ENCODE measurements at regions of chr3 and their contacts with region 1.

Region 1: GRCh38 chr3:22089284-22089683 is 338.3 kb upstream of the ZNF385D start:
- DNase-seq: peak; percentile 80
- ATAC-seq: peak; percentile 90
- H3K4me3 ChIP-seq: no peak overlapping the region
- H3K27ac ChIP-seq: no peak overlapping the region
- H3K4me1 ChIP-seq: 0 out of 2 replicates have a peak, but pooled peaks cover 4% of the 10 kb centered on the region
- H3K27me3 ChIP-seq: no peaks in the 10 kb centered on the region
- CTCF ChIP-seq: peak; percentile 90

Region 2: GRCh38 chr3:21718161-21718765 is 371.0 kb before region 1 on chr3:
- CTCF ChIA-PET with region 1: no interaction called
- POLR2A ChIA-PET with region 1: no interaction called
- intact Hi-C with region 1: no loop called
- DNase-seq: peak; percentile 97
- ATAC-seq: peak; percentile 98
- H3K4me3 ChIP-seq: no peak overlapping the region
- H3K27ac ChIP-seq: peak overlapping the region; percentile 94
- H3K4me1 ChIP-seq: peaks cover 18% of the 10 kb centered on the region
- H3K27me3 ChIP-seq: no peaks in the 10 kb centered on the region
- CTCF ChIP-seq: no peak

Region 3: DNA sequence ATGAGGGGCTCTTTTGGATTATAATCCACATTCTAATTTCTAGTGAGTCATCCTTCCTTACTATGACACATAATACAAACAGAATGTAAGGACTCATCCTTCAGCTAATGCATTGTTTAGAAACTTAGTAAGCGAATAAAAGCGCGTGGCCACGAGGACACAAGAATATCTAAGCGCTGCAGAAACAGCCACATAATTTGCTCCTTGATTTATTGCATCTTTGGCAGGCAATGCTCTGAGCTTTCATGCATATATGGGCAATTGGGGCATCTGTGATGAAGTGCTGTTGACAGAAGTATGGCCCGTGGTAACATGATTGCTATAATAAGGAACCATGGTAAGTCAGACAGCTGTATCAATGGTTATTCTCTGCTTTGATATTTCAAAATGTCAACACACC is 147.0 kb before region 1 on chr3:
- CTCF ChIA-PET with region 1: no interaction called
- POLR2A ChIA-PET with region 1: no interaction called
- intact Hi-C with region 1: loop called (anchors 10 kb)
- DNase-seq: peak; percentile 96
- ATAC-seq: peak; percentile 99
- H3K4me3 ChIP-seq: no peak overlapping the region
- H3K27ac ChIP-seq: peak overlapping the region; percentile 41
- H3K4me1 ChIP-seq: peaks cover 7% of the 10 kb centered on the region
- H3K27me3 ChIP-seq: no peaks in the 10 kb centered on the region
- CTCF ChIP-seq: no peak

Region 4: DNA sequence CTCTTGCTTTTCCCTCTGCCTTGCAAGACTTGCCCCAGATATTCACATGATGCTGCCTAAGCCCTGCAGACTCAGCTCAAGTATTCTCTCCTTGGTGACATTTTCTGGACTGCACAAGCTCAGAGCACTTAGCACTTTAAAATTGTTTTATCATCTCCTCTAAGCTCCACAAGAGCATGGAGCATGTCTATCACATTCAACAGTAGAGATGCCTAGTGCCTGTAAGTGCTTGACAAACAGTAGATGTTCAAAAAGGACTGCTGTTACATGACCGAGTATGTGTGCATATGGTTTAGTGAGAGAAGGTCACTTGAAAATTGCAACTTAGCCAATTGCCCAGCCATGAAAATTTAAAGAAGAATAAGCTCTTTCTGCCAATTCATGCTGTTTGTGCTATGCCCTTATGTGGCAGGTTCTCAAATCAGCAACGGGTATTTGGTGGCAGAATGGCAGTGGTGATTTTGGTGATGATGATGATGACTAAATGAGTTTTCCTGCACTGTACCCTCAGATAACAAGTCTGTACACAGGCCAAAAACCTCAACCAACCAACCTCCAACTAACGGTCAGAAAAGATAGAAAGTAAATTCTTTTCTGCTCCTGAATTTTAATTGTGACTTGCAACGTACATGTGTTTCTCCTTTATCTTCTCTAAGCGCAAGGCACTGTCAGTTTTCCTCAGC is 466.6 kb after region 1 on chr3:
- CTCF ChIA-PET with region 1: no interaction called
- POLR2A ChIA-PET with region 1: no interaction called
- intact Hi-C with region 1: loop called (anchors 5 kb)
- DNase-seq: no peak
- ATAC-seq: no peak
- H3K4me3 ChIP-seq: no peak overlapping the region
- H3K27ac ChIP-seq: no peak overlapping the region
- H3K4me1 ChIP-seq: no peaks in the 10 kb centered on the region
- H3K27me3 ChIP-seq: no peaks in the 10 kb centered on the region
- CTCF ChIP-seq: no peak

Region 5: DNA sequence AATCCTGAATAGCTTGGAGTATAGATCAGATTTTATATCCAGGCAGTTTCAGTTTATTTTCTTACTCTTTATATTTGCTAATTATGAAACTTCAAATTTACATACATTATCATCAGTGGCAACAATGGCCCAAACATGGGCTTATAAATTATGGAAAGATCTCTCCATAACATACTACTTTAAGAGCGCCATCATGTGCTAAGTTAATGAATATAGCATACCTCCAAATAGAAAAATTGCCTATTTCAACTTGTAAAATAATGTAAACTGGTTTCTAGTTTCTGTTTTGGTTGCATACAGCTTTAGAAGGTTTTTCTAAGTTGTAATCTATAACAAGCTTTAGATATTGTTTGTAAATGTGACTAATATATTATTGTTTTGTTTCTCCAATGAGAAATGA is 582.6 kb after region 1 on chr3:
- CTCF ChIA-PET with region 1: no interaction called
- POLR2A ChIA-PET with region 1: no interaction called
- intact Hi-C with region 1: loop called (anchors 5 kb)
- DNase-seq: peak; percentile 33
- ATAC-seq: peak; percentile 35; the same call in 1 of the 2 replicates
- H3K4me3 ChIP-seq: no peak overlapping the region
- H3K27ac ChIP-seq: no peak overlapping the region
- H3K4me1 ChIP-seq: no peaks in the 10 kb centered on the region
- H3K27me3 ChIP-seq: no peaks in the 10 kb centered on the region
- CTCF ChIP-seq: peak; percentile 65

Region 6: DNA sequence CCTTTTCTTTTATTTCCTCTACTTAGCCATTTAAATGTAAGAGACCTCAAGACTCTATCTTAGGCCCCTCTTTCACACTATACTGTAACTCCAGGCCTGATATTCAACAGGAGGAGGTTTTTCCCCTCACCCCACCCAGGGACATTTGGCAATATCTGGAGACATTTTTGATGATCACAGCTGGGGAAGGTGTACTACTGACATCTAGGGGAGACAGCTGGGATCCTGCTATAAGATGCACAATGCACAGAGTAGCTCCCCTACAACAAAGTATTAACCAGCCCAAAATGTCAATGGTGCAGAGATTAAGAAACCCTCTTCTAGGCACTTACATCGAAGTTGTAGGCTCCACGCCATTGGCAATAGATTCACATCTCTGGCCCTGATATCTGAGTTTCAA is 596.3 kb after region 1 on chr3:
- CTCF ChIA-PET with region 1: no interaction called
- POLR2A ChIA-PET with region 1: no interaction called
- intact Hi-C with region 1: loop called (anchors 1 kb)
- DNase-seq: peak; percentile 60
- ATAC-seq: peak; percentile 94
- H3K4me3 ChIP-seq: no peak overlapping the region
- H3K27ac ChIP-seq: no peak overlapping the region
- H3K4me1 ChIP-seq: no peaks in the 10 kb centered on the region
- H3K27me3 ChIP-seq: no peaks in the 10 kb centered on the region
- CTCF ChIP-seq: peak; percentile 87

Region 7: DNA sequence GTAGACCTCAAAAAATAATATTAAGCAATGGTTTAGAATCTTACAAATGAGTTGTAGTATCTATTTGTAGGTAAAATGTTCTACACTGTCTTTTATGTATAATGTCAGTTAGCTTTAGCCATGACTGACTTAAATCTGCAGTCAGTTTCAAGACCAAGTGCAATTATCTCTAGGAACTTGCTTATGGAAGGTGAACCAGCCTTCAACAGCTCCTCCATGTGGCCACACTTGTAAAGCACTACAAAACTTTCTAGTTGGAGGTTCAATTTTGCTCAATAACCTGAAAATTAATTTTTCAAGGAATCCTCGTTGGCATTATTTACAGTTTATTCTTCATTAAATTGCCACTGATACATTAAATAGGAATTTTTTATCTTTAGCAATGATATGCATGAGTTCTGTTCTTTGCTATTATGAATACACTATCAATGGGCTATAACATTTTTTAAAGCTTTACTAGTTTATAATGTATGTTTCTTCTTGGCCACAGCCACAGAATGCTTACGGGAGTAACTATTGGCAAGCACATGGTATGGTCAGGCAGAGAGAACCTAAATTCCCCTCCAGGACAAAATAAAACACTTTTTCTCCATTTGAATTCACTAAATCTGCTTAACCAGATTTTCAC is 798.5 kb after region 1 on chr3:
- CTCF ChIA-PET with region 1: no interaction called
- POLR2A ChIA-PET with region 1: no interaction called
- intact Hi-C with region 1: loop called (anchors 5 kb)
- DNase-seq: peak; percentile 59
- ATAC-seq: peak; percentile 70
- H3K4me3 ChIP-seq: no peak overlapping the region
- H3K27ac ChIP-seq: no peak overlapping the region
- H3K4me1 ChIP-seq: peaks cover 10% of the 10 kb centered on the region
- H3K27me3 ChIP-seq: peaks cover 22% of the 10 kb centered on the region
- CTCF ChIP-seq: peak; percentile 90

Region 8: DNA sequence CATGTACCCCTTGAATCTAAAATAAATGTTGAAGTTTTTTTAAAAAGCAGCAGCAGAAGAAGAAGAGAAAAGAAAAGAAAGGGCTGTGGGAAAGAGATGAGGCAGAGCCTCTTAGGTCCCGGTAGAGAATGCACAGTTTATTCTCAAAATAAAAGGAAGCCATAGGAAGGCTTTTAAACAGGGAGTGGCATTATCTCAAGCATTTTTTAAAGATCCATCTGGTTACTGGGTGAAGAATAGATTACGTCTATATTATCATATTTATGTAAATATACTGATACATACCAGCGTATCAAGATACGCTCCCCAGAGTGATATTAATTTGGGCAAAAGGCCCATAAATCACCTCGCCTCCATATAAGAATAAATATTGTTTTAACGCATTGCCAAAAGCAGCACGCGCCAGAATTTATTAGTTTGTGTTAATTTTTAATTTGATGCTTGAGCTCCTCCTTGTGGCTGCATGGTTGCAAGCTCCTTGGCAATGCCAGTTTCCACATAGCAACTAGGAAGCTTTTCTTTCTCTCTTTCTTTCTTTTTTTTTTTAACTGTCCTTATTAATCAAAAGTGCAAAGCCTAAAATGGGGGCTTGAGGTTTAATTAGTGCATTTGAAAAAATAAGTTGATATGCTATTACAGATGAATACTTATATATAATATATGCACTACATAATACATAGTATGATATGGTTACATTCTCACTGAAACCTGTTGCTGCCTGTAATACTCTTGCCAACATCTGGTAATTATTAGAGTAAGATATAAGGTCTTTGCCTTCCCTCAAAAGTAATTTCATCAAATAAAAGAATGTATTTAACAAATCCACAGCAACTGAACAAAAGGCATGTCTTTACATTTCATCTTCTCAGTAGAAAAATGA is 871.1 kb after region 1 on chr3:
- CTCF ChIA-PET with region 1: no interaction called
- POLR2A ChIA-PET with region 1: no interaction called
- intact Hi-C with region 1: loop called (anchors 1 kb)
- DNase-seq: peak; percentile 74
- ATAC-seq: peak; percentile 66
- H3K4me3 ChIP-seq: no peak overlapping the region
- H3K27ac ChIP-seq: no peak overlapping the region
- H3K4me1 ChIP-seq: no peaks in the 10 kb centered on the region
- H3K27me3 ChIP-seq: no peaks in the 10 kb centered on the region
- CTCF ChIP-seq: peak; percentile 92